Spleen (tissue), 13 donors: ENCODE measurements at regions of chr10 and their contacts with region 1.

Region 1: DNA sequence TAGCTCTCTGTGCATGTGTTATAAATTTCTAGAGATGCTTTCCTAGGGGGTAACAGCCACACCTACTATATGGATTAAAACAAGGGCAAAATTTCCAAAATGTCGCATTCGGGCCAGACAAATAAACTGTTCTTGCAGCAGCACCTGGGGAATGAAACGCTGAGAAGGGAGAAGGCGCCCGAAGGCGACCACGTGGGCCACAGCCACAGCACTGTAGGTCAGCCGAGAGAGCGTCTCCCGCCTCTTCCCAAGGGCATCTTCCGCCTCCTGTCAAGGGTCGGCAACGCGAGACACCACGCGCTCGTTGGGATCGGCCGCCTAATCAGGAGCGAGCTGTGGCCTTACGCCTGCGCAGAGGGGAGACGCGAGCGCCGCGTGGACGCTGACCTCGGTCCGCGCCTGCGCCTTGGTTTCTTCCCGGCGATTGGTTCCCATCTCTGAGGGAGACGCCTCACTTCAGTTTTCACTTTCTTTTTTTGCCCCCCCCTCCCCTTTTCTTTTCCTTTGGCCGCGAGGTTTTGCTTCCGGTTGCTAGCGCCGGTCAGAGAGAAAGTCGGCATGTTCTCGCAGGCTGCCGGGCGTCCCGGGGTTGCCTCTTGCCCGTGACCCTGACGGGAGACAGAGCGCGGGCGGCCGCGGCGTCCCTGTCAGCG is at the start of gene TASOR2:
- DNase-seq: peak; percentile 99
- H3K4me3 ChIP-seq: peak within 1 kb of the TSS; percentile 95 to 100 (median 98)
- H3K27ac ChIP-seq: peak within 1 kb of the TSS; percentile 90 to 97 (median 94)
- H3K4me1 ChIP-seq: peaks cover 23 to 49% (median 44%) of the 10 kb centered on the region in 6 donors
- H3K27me3 ChIP-seq: no peaks in the 10 kb centered on the region
- CTCF ChIP-seq: peak in 1 of 11 experiments; percentile 32
- POLR2A ChIP-seq: no peak
- total RNA-seq, gene TASOR2: 58.3 to 87.9 (median 72.6) TPM

Region 2: GRCh38 chr10:5534880-5535856 is 149.3 kb before region 1 on chr10:
- intact Hi-C with region 1: no loop called
- DNase-seq: peak; percentile 13
- H3K4me3 ChIP-seq: no peak overlapping the region
- H3K27ac ChIP-seq: peak overlapping the region in 3 of 8 donors; percentile 13 to 59 (median 29)
- H3K4me1 ChIP-seq: peaks cover 0 to 8% (median 0%) of the 10 kb centered on the region in 6 donors
- H3K27me3 ChIP-seq: no peaks in the 10 kb centered on the region
- CTCF ChIP-seq: no peak
- POLR2A ChIP-seq: no peak

Region 3: GRCh38 chr10:5813287-5814109 is 129.1 kb after region 1 on chr10 and contains the start of gene GDI2:
- intact Hi-C with region 1: loop called (anchors 10 kb)
- DNase-seq: peak; percentile 98
- H3K4me3 ChIP-seq: peak within 1 kb of the TSS; percentile 82 to 95 (median 90)
- H3K27ac ChIP-seq: peak within 1 kb of the TSS; percentile 95 to 99 (median 98)
- H3K4me1 ChIP-seq: peaks cover 34 to 88% (median 74%) of the 10 kb centered on the region in 6 donors
- H3K27me3 ChIP-seq: no peaks in the 10 kb centered on the region
- CTCF ChIP-seq: peak in 3 of 11 experiments; percentile 33 to 59 (median 52)
- POLR2A ChIP-seq: peak; percentile 10 to 93 (median 78)
- total RNA-seq, gene GDI2: 190 to 272 (median 211) TPM